Ovary (tissue), 10 donors: ENCODE measurements at regions of chr1 and their contacts with region 1.

Region 1: GRCh38 chr1:143604887-143605286 is 366.9 kb downstream of the FAM72C start:
- DNase-seq: no peak
- H3K4me3 ChIP-seq: no peak overlapping the region
- H3K27ac ChIP-seq: no peak overlapping the region
- H3K4me1 ChIP-seq: no peaks in the 10 kb centered on the region
- H3K27me3 ChIP-seq: no peaks in the 10 kb centered on the region
- CTCF ChIP-seq: no peak
- EP300 ChIP-seq: no peak
- POLR2A ChIP-seq: no peak

Region 2: DNA sequence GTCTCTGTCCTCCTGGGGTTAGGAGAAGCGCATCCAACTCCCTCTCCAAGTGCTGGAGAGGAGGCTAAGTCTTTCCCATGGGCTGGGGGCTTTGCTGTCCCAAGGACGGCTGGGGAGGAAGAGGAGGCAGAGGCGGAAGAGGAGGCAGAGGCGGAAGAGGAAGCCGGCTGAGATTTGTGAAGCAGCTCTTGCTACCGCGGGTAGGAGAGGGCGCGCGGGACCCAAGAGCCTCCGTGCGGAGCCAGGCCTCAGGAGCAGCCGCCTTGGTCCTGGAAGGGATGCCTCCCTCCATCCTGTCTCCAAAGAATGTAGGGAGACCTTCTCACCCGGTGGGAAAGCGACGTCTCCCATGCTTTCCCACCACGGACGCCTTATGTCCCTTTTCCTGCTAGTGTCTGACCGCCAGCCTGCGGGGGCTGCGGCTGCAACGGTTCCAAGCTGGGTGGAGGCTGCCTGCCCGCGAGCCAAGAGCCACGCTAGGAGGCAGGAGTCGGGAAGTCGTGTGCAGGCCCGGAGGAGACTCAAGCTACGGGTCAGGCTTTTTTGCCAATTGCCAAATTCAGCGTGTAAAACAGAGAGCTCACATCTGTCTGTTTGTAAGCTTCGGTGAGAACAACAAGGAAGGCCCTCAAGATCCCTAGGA is 46.6 kb after region 1 on chr1:
- intact Hi-C with region 1: loop called in 1 of 4 experiments (anchors 10 kb)
- DNase-seq: no peak
- H3K4me3 ChIP-seq: no peak overlapping the region
- H3K27ac ChIP-seq: no peak overlapping the region
- H3K4me1 ChIP-seq: no peaks in the 10 kb centered on the region
- H3K27me3 ChIP-seq: no peaks in the 10 kb centered on the region
- CTCF ChIP-seq: no peak
- EP300 ChIP-seq: no peak
- POLR2A ChIP-seq: no peak

Region 3: GRCh38 chr1:143665606-143666005 is 60.7 kb after region 1 on chr1:
- intact Hi-C with region 1: no loop called
- DNase-seq: no peak
- H3K4me3 ChIP-seq: no peak overlapping the region
- H3K27ac ChIP-seq: no peak overlapping the region
- H3K4me1 ChIP-seq: no peaks in the 10 kb centered on the region
- H3K27me3 ChIP-seq: no peaks in the 10 kb centered on the region
- CTCF ChIP-seq: no peak
- EP300 ChIP-seq: no peak
- POLR2A ChIP-seq: no peak